Activated naive CD4-positive, alpha-beta T cell treated with anti-CD3 and anti-CD28 coated beads, Interleukin-2, amount 10 ng/mL, durations not matched to agents 7 days and 5 days (primary cell): ENCODE measurements at regions of chr14 and their contacts with region 1.

Region 1: DNA sequence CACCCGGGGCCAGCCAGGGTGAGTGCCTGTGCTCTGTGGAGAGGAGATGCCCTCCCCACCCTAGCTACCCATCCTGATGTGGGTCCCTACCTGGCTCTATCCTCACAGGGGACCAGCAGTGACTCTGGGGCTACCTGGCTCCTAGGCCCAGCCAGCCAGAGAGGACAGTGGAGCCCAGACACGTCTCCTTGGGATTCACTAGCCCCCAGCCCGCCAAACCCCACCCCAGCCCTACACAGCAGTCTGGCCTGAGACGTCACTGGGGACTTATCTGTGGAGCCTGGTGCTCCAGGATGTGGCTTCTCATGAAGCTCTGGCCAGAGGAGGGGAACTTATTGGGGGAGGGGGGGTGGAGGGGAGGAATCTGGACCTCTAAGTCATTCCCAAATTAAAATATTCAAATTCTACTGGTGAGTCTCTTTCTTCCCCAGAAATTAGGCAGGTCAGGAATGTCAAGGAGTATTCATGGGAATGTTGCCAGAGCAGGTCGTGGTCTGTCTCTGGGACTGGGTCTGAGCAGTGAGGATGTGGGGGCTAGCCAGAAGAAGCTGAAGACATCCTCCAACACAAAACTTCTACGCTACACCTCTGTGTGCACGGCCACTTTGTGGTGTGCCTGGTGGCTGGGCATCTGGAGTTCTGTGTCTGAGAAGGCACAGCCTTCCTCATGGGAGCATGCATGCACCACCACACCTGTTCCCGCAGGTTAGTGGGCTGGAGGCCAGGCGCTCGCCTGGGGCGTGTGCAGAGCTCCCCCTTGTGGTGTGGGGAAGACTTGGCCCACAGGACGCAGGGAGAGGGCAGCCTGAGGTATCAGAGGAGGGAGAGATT is 2.7 kb downstream of the CMTM5 start:
- DNase-seq: peak; percentile 76
- H3K4me3 Mint-ChIP-seq: no peak overlapping the region
- H3K27ac Mint-ChIP-seq: no peak overlapping the region
- H3K4me1 Mint-ChIP-seq: no peaks in the 10 kb centered on the region
- H3K27me3 Mint-ChIP-seq: peaks cover 58% of the 10 kb centered on the region

Region 2: DNA sequence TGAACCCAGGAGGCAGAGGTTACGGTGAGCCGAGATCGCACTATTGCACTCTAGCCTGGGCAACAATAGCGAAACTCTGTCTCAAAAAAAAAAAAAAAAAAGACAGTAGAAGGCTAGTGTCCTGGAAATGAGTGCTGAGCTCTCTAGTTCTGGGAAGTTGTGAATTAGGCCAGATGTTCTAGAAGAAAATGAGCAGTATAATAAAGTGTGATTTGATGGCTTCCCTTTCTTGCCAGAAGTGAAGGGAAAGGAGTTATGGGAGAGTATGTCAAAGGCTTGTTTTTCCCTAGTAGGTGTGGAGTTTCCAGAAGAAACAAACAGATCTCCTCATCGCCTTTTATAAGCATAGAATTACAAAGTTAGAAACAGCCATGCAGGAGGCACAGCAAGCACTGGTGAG is 121.3 kb before region 1 on chr14:
- CTCF ChIA-PET with region 1: interaction called, 16 read pairs
- DNase-seq: no peak
- H3K4me3 Mint-ChIP-seq: no peak overlapping the region
- H3K27ac Mint-ChIP-seq: no peak overlapping the region
- H3K4me1 Mint-ChIP-seq: no peaks in the 10 kb centered on the region
- H3K27me3 Mint-ChIP-seq: peaks cover 25% of the 10 kb centered on the region

Region 3: GRCh38 chr14:23301288-23301968 is 78.2 kb before region 1 on chr14:
- CTCF ChIA-PET with region 1: no interaction called
- DNase-seq: peak; percentile 97
- H3K4me3 Mint-ChIP-seq: peak overlapping the region; percentile 97
- H3K27ac Mint-ChIP-seq: peak overlapping the region; percentile 100
- H3K4me1 Mint-ChIP-seq: peaks cover 36% of the 10 kb centered on the region
- H3K27me3 Mint-ChIP-seq: peaks cover 26% of the 10 kb centered on the region

Region 4: DNA sequence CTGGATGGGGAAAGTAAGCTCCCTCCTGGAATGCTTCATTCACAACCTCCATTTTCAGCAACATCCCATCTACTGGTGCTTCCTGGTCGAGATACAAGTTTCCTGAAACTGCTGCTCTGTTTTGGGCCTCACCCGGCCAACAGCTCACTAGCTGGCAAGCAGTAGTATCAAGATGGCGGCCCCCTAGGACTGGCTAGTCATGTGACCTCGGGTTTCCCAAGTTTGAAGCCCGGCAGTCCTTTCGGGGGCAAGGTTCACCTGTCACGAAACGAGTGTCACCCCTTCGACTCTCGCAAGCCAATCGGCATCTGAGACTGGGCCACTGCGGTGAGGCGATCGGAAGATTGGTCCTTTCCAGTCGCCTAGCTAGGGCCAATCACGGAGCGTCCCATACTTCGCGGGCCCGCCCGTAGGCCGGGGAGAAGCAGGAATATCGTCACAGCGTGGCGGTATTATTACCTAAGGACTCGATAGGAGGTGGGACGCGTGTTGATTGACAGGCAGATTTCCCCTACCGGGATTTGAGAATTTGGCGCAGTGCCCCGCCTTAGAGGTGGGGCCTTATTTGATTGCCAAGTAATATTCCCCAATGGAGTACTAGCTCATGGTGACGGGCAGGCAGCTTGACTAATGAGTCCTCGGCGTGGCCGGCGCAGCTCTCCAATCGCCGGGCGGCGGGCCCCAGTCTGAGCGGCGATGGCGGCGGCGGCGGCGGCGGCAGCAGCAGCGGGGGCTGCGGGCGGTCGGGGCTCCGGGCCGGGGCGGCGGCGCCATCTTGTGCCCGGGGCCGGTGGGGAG is 58.6 kb before region 1 on chr14 and contains the start of gene PABPN1:
- CTCF ChIA-PET with region 1: interaction called, 33 read pairs
- DNase-seq: peak; percentile 99
- H3K4me3 Mint-ChIP-seq: peak within 1 kb of the TSS; percentile 90
- H3K27ac Mint-ChIP-seq: peak within 1 kb of the TSS; percentile 97
- H3K4me1 Mint-ChIP-seq: peaks cover 29% of the 10 kb centered on the region
- H3K27me3 Mint-ChIP-seq: peaks cover 8% of the 10 kb centered on the region

Region 5: DNA sequence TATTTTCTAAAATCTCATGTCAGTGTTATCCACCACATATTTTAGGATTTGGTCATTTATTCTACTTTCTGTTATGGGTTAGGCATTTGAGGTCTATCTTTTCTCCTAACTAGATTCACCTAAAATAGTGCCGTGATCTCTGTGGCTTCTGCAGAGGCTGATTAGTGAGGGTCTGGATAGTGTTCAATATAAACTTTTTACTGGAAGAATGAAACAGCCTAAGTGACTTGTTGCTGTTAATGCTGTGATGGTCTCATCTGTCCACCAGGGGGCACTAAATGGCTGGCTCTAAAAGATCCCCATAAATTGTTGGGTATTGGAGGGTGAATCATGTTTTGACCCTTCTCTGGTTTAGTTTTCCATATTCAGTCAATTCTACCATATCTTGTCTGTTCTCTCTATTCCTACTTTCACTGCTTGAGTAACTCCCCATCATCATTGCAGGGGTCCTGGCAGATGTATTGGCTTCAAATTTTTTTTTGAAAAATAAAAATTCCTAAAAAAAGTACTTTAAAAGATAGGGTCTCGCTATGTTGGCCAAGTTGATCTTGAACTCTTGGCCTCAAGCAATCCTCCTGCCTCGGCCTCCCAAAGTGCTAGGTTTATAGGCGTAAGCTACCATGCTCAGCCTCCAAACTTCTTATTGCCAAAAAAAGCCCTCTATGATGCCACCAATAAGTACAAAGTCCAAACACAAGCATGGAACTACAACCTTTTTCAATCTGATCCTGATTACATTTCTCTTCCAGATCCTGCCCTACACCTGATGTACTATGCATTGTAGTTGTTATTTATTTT is 51.4 kb before region 1 on chr14:
- CTCF ChIA-PET with region 1: interaction called, 33 read pairs
- DNase-seq: peak; percentile 73
- H3K4me3 Mint-ChIP-seq: no peak overlapping the region
- H3K27ac Mint-ChIP-seq: no peak overlapping the region
- H3K4me1 Mint-ChIP-seq: peaks cover 4% of the 10 kb centered on the region
- H3K27me3 Mint-ChIP-seq: peaks cover 4% of the 10 kb centered on the region